Naive thymus-derived CD4-positive, alpha-beta T cell (primary cell): ENCODE measurements at regions of chr7 and their contacts with region 1.

Region 1: DNA sequence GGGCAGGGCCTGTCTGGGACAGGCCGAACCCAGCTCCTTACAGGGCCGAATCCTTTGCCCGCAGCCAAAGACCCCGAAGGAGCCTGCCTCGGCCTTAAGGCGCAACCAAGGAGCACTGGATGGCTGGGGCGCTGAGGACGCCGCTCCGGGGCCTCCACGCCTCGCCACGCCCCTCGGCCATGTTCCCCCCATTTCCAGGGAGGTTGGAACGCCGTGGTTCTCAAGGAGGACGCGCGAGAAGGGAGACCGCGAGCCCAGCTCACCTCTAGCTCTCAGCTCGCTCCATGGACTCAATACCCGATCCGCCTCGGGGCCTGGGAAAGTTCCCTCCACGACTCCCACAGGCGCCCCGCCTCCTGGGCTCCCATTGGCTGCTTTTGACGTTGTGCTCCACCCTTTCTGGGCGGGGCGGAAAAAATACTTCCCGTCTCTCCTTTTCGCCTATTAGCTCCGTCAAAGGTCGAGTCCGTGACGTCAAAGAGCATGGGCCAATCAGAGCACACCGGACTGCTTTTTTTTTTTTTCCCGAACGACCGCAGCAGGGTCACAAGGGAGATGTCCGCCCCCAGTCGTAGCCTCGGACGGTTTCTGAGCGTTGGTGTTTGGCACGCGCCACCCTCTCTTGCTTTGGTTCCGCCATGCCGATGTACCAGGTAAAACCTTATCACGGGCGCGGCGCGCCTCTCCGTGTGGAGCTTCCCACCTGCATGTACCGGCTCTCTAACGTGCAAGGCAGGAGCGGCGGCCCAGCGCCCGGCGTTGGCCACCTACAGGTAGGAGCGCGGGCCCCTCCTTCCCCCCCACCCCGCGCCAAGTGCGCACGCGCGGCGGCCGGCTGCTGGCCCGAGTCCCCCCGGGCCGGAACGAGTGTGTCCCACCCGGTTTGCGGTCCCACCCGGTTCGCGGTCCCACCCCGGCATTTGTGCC is 305.7 kb downstream of the TYW1 start:
- DNase-seq: peak; percentile 90 to 97 (median 95)
- ATAC-seq: peak; percentile 89
- H3K4me3 ChIP-seq: peak overlapping the region; percentile 74
- H3K4me3 Mint-ChIP-seq: peak overlapping the region; percentile 89 to 99 (median 96)
- H3K27ac ChIP-seq: peak overlapping the region; percentile 88
- H3K27ac Mint-ChIP-seq: peak overlapping the region; percentile 87 to 99 (median 98)
- H3K4me1 ChIP-seq: peaks cover 3 to 7% of the 10 kb centered on the region in 2 donors
- H3K4me1 Mint-ChIP-seq: peaks cover 10 to 36% (median 25%) of the 10 kb centered on the region in 7 donors
- H3K27me3 ChIP-seq: no peaks in the 10 kb centered on the region
- H3K27me3 Mint-ChIP-seq: no peaks in the 10 kb centered on the region

Region 2: DNA sequence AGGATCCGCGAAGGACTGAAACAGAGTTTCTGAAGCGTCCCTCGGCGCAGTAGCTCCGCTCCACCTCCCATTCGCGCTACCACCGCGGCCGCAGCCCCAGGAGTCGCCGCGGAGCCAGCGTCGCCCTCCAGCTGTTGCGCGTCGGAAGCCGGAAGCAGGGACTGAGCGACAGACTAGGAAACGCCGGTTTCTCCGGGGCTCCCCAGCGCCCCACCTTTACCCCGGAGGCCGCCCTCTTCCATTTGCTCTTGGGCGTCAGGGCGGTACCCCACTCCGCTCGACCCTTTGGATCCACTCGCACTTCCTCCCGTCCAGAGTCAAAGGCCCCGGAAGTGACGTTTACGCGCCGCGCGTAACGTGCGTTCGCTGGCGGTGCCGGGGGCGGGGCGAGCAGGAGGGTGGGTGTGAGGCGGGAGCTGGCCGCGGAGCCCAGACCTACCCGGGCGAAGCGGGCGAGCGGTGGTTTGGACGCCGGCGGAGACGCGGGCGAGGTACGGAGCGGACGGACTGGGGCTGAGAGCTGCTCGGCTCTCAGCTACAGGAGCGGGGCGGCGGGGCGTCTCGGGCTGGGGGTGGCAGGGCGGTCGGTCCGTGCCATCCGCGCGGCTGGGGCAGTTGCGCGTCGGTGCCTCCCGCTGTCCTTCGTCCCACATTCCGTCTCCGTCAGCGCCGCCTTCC is 561.9 kb before region 1 on chr7 and contains the start of gene RABGEF1:
- CTCF ChIA-PET with region 1: no interaction called
- POLR2A ChIA-PET with region 1: no interaction called
- intact Hi-C with region 1: loop called in 1 of 2 experiments (anchors 10 kb)
- DNase-seq: peak; percentile 94 to 98 (median 95)
- ATAC-seq: peak; percentile 95
- H3K4me3 ChIP-seq: peak within 1 kb of the TSS; percentile 82
- H3K4me3 Mint-ChIP-seq: peak within 1 kb of the TSS; percentile 89 to 98 (median 94)
- H3K27ac ChIP-seq: peak within 1 kb of the TSS; percentile 84
- H3K27ac Mint-ChIP-seq: peak within 1 kb of the TSS; percentile 94 to 98 (median 96)
- H3K4me1 ChIP-seq: peaks cover 0 to 6% of the 10 kb centered on the region in 2 donors
- H3K4me1 Mint-ChIP-seq: peaks cover 30 to 74% (median 54%) of the 10 kb centered on the region in 7 donors
- H3K27me3 ChIP-seq: no peaks in the 10 kb centered on the region
- H3K27me3 Mint-ChIP-seq: no peaks in the 10 kb centered on the region
- total RNA-seq, gene RABGEF1: 20.7 to 35.7 (median 22.2) TPM

Region 3: DNA sequence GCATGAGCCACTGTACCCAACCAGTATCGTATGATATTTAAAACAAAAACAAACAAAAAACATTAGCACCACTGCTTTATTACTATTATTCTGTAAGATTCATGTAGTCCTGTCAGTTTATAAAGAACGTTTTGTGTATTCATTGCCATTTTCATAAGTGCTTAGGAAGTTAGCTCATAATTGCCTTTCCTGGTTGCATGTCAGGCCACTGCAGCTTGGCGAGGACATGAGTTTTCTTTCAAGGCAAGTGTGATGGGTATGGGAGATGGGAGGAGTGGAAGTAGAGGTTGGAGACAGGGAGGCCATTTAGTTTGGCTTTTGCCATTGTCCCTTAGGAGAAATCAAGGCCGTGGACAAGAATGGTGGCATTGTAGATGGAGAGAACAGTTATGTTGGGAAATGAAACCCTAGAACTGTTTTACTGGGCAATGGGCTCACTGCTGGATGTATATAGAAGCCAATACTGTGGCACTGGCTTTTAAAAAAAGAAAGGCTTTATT is 256.8 kb before region 1 on chr7:
- CTCF ChIA-PET with region 1: interaction called, 3 read pairs
- POLR2A ChIA-PET with region 1: no interaction called
- intact Hi-C with region 1: loop called (anchors 2 to 10 kb)
- DNase-seq: no peak
- ATAC-seq: no peak
- H3K4me3 ChIP-seq: no peak overlapping the region
- H3K4me3 Mint-ChIP-seq: no peak overlapping the region
- H3K27ac ChIP-seq: no peak overlapping the region
- H3K27ac Mint-ChIP-seq: no peak overlapping the region
- H3K4me1 ChIP-seq: no peaks in the 10 kb centered on the region
- H3K4me1 Mint-ChIP-seq: peaks cover 2 to 17% (median 11%) of the 10 kb centered on the region in 7 donors
- H3K27me3 ChIP-seq: no peaks in the 10 kb centered on the region
- H3K27me3 Mint-ChIP-seq: no peaks in the 10 kb centered on the region

Region 4: DNA sequence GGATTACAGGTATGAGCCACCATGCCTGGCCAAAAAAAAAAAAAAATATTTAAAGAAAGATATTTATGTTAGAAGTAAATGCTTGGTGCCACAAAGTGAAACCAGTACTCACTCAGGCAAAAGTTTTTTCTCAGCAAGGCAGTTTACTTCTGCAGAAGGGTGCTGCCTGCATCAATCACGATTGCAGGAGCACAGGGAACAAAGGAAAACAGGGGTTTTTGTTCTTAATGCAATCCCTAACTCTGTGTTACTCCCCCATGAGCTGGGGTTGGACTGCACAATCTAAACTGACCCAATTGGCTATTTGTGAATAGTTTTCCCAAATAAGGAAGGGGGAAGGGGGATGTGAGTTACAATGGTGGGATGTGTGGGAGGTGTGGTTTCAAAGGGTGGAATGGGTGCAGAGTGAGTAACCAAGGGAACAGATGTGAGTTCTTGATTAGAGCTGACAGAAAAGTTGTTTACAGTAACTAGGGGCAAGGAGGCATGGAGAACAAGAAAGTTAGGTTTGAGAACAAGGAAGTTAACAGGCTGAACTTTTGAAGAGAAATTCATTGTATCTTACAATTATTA is 50.3 kb before region 1 on chr7:
- CTCF ChIA-PET with region 1: no interaction called
- POLR2A ChIA-PET with region 1: no interaction called
- intact Hi-C with region 1: no loop called
- DNase-seq: no peak
- ATAC-seq: no peak
- H3K4me3 ChIP-seq: no peak overlapping the region
- H3K4me3 Mint-ChIP-seq: no peak overlapping the region
- H3K27ac ChIP-seq: no peak overlapping the region
- H3K27ac Mint-ChIP-seq: no peak overlapping the region
- H3K4me1 ChIP-seq: no peaks in the 10 kb centered on the region
- H3K4me1 Mint-ChIP-seq: peaks cover 0 to 2% (median 0%) of the 10 kb centered on the region in 7 donors
- H3K27me3 ChIP-seq: no peaks in the 10 kb centered on the region
- H3K27me3 Mint-ChIP-seq: no peaks in the 10 kb centered on the region

Region 5: GRCh38 chr7:67542916-67543315 is 240.5 kb after region 1 on chr7:
- CTCF ChIA-PET with region 1: no interaction called
- POLR2A ChIA-PET with region 1: no interaction called
- intact Hi-C with region 1: no loop called
- DNase-seq: no peak
- ATAC-seq: no peak
- H3K4me3 ChIP-seq: no peak overlapping the region
- H3K4me3 Mint-ChIP-seq: no peak overlapping the region
- H3K27ac ChIP-seq: no peak overlapping the region
- H3K27ac Mint-ChIP-seq: no peak overlapping the region
- H3K4me1 ChIP-seq: no peaks in the 10 kb centered on the region
- H3K4me1 Mint-ChIP-seq: no peaks in the 10 kb centered on the region
- H3K27me3 ChIP-seq: no peaks in the 10 kb centered on the region
- H3K27me3 Mint-ChIP-seq: no peaks in the 10 kb centered on the region